Esophagus muscularis mucosa (tissue), 4 donors: ENCODE measurements at regions of chr11 and their contacts with region 1.

Region 1: DNA sequence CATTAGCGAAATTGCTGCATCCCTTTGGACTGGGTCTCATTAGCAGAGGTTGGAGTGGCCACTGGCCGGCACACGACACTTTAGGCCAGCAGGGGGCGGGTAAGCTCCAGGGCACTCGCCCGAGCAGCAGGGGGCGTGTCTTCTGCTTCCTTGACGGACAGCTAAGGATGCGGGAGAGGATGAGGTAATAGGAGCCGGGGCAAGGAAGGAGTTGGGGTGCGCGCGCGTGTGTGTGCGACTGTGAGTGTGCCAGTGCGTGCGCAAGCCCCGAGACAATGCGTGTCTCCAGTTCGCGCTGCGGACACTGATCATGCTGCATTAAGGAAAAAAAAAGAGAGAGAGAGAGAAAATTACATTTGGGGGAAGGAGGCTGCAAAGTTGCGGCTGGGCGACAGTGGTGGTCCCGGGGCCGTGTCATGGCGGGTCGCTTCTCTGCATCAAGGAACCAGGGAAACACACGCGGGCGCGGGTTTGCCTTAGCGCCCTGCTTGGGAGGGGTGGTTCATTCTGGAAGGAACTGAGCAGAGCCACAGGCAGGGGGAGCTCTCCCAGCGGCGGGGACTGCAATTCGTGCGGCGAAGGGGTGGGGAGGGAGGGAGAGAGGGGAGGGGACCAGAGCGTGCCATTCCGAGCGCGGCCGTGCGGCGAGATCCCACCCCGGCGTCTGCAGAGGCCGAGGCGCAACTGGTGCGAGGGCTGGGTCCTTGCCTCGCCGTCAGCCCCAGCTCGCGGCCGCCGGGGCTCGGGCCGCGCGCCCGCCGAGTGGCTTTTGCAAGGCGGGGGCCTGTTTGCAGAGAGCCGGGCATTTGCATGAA is at the start of gene DTX4:
- DNase-seq: peak; percentile 97
- H3K4me3 ChIP-seq: peak within 1 kb of the TSS; percentile 64 to 87 (median 74)
- H3K27ac ChIP-seq: peak within 1 kb of the TSS; percentile 51 to 74 (median 70)
- H3K4me1 ChIP-seq: peaks cover 9 to 38% (median 25%) of the 10 kb centered on the region in 4 donors
- H3K27me3 ChIP-seq: peaks cover 0 to 10% (median 5%) of the 10 kb centered on the region in 4 donors
- CTCF ChIP-seq: peak; percentile 72 to 94 (median 88)
- EP300 ChIP-seq: no peak
- POLR2A ChIP-seq: no peak
- total RNA-seq, gene DTX4: 3.1 to 8.8 (median 4.5) TPM

Region 2: DNA sequence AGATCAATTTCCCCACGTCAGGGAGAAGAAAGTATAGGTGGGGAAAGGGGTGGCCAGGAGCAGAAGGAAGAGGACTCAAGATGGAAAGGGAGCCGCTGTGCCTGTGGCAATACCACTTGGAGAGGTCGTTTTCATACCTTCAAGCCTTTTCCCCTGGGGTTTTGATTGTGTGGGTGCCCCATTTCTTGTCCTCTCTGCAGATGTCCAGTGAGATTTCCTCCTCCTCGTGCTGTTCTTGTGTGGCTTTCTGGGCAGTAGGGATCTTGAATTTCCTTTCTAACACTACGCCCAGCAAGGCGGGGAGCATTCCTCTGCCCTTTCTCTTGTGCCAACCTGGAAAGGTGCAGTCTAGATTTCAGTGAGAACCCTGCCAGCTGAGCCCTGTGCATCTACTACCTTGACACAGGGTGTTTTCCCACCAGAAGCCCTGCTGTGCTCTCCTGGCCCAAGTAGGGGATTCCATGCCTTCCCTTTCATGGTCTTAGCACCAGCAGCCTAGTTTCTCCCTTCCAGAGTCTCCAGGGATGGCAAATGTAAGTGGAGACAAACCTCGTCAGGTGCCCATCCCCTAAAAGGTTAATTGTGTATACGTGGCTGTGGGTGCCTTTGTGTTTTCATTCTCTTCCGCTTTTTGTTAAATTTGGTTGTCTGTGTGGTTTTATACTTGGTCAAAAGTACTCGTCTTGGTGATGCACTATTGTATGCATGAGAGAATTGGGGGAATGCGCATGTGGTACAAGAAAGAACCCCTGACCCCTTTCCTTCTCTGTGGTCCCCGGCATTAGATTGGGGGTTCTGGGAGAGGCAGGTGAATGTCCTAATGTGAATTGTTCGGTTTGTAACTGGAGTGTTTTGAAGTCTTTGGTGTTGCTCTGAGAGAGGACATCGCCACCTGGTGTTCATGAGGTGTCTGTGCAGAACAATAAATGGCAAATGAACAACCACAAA is 112.4 kb after region 1 on chr11:
- intact Hi-C with region 1: loop called (anchors 2 kb)
- DNase-seq: peak; percentile 91
- H3K4me3 ChIP-seq: no peak overlapping the region
- H3K27ac ChIP-seq: no peak overlapping the region
- H3K4me1 ChIP-seq: peaks cover 0 to 4% (median 0%) of the 10 kb centered on the region in 4 donors
- H3K27me3 ChIP-seq: peaks cover 0 to 11% (median 0%) of the 10 kb centered on the region in 4 donors
- CTCF ChIP-seq: peak; percentile 66 to 83 (median 74)
- EP300 ChIP-seq: no peak
- POLR2A ChIP-seq: no peak

Region 3: DNA sequence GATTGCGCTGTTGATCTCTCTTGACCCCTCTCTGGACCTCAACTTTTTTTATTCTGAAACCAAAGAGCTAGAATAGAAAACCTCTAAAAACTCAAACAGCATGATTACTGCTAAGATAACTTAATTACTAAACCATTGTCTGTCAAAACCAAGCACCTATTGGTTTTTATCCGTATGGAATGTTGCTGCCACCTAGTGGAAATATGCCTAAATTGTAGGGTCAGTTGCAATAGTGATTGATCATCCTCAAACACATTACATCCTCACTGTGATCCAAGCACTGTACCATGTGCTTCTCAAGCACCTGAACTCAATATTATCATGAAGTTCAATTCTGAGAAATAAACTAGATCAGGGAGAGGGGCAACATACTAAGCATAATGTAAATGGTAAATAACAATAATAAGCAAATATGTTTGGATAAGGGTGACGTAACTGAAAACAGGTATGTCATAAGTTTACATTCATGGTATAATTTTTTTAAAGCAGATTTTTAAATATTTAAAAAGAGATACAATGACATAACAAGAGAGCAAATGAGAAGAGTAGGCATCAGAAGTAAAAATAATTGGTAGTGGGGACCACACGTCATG is 258.3 kb after region 1 on chr11:
- intact Hi-C with region 1: loop called (anchors 10 kb)
- DNase-seq: no peak
- H3K4me3 ChIP-seq: no peak overlapping the region
- H3K27ac ChIP-seq: no peak overlapping the region
- H3K4me1 ChIP-seq: no peaks in the 10 kb centered on the region
- H3K27me3 ChIP-seq: no peaks in the 10 kb centered on the region
- CTCF ChIP-seq: peak; percentile 28 to 56 (median 35)
- EP300 ChIP-seq: no peak
- POLR2A ChIP-seq: no peak

Region 4: DNA sequence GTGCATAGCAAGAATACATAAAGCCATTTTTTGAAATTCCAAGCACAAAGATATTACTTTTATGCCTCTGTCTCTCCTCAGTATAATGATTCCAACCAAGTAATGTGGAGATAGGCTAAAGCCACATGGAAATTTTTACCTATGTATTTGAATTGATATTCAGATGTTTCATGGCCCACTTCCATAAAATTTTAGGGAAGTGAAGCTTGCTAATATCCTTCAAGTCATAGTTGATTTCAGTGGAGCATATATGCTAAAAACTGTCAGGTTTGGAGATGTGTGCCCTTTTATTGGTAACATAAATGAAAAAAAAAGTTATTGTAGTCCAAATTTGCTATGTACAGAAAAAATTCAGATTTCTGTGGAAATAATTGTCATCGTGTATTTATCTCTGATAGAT is 1059.0 kb after region 1 on chr11:
- intact Hi-C with region 1: no loop called
- DNase-seq: no peak
- H3K4me3 ChIP-seq: no peak overlapping the region
- H3K27ac ChIP-seq: no peak overlapping the region
- H3K4me1 ChIP-seq: no peaks in the 10 kb centered on the region
- H3K27me3 ChIP-seq: no peaks in the 10 kb centered on the region
- CTCF ChIP-seq: no peak
- EP300 ChIP-seq: no peak
- POLR2A ChIP-seq: no peak